Activated naive CD4-positive, alpha-beta T cell treated with anti-CD3 and anti-CD28 coated beads, Interleukin-2, amount 10 ng/mL, durations not matched to agents 7 days and 5 days (primary cell): ENCODE measurements at regions of chr14 and their contacts with region 1.

Region 1: GRCh38 chr14:71138448-71139293 is 231.4 kb downstream of the PCNX1 start:
- DNase-seq: peak; percentile 71
- H3K4me3 Mint-ChIP-seq: no peak overlapping the region
- H3K27ac Mint-ChIP-seq: no peak overlapping the region
- H3K4me1 Mint-ChIP-seq: peaks cover 31% of the 10 kb centered on the region
- H3K27me3 Mint-ChIP-seq: peaks cover 15% of the 10 kb centered on the region

Region 2: GRCh38 chr14:70995676-70996075 is 143.0 kb before region 1 on chr14:
- CTCF ChIA-PET with region 1: no interaction called
- DNase-seq: no peak
- H3K4me3 Mint-ChIP-seq: no peak overlapping the region
- H3K27ac Mint-ChIP-seq: no peak overlapping the region
- H3K4me1 Mint-ChIP-seq: peaks cover 31% of the 10 kb centered on the region
- H3K27me3 Mint-ChIP-seq: no peaks in the 10 kb centered on the region

Region 3: DNA sequence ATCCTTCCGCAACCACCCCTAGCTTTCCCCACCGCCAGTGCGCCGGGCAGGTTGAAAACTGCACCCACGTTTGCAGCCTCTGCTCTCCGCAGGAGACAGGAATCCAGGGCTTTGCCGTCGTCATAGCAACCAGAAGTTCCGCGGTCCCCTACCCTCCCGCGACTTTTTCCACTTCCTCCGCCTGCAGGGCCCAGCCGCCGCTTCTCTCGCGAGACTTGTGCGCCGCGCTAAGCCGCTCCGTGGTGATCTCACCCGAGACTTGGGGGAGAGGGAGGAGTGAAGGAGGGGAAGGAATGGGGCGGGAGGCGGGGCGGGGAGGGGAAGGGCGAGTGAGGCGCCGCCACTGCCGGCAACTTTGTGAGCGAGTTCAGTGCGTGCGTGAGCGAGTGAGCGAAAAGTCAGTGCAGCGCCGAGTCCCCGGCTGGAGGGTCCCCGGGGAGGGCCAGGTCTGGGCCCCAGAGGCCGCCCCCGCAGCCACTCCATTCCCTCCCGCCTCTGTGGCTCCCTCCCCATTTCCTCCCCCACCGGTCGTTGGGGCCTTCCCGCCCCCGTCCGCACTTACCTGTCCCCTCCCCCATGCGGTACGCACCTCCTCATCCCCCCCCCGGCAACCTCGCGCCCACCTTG is 181.5 kb after region 1 on chr14:
- CTCF ChIA-PET with region 1: interaction called, 22 read pairs
- DNase-seq: peak; percentile 99
- H3K4me3 Mint-ChIP-seq: peak within 1 kb of the TSS; percentile 89
- H3K27ac Mint-ChIP-seq: peak within 1 kb of the TSS; percentile 90
- H3K4me1 Mint-ChIP-seq: peaks cover 42% of the 10 kb centered on the region
- H3K27me3 Mint-ChIP-seq: peaks cover 12% of the 10 kb centered on the region

Region 4: GRCh38 chr14:71403656-71404055 is 265.0 kb after region 1 on chr14:
- CTCF ChIA-PET with region 1: interaction called, 18 read pairs
- DNase-seq: peak; percentile 58
- H3K4me3 Mint-ChIP-seq: no peak overlapping the region
- H3K27ac Mint-ChIP-seq: peak overlapping the region; percentile 42
- H3K4me1 Mint-ChIP-seq: peaks cover 44% of the 10 kb centered on the region
- H3K27me3 Mint-ChIP-seq: no peaks in the 10 kb centered on the region

Region 5: DNA sequence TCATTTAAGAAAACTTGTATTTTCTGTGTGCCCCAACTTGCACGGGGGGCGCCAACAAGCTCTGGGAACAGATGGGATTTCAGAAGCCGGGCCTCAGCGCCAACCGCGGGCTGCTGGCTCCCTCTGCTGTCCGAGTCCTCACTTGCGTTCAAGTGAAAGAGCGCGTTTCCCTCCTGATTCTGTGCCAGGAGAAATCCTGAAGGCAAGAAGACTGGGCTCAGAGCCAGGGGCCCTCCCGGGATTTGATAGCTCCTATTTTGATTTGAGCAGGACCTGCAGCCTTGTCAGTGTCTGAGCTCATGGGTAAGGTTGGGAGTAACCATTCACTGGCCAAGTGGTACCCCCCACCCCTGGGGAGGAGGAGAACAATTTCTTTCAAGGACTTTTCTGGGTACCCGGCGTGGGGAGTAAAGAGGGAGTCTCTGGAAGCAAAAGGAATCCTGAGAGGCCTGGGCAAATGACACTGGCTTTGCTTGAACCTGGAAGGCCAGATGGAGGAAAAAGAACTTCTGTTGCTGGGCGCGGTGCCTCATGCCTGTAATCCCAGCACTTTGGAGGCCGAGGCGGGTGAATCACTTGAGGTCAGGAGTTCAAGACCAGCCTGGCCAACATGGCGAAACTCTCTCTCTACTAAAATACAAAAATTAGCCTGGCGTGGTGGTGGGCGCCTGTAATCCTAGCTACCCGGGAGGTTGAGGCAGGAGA is 614.6 kb after region 1 on chr14:
- CTCF ChIA-PET with region 1: interaction called, 56 read pairs
- DNase-seq: peak; percentile 80
- H3K4me3 Mint-ChIP-seq: no peak overlapping the region
- H3K27ac Mint-ChIP-seq: no peak overlapping the region
- H3K4me1 Mint-ChIP-seq: no peaks in the 10 kb centered on the region
- H3K27me3 Mint-ChIP-seq: peaks cover 33% of the 10 kb centered on the region

Region 6: DNA sequence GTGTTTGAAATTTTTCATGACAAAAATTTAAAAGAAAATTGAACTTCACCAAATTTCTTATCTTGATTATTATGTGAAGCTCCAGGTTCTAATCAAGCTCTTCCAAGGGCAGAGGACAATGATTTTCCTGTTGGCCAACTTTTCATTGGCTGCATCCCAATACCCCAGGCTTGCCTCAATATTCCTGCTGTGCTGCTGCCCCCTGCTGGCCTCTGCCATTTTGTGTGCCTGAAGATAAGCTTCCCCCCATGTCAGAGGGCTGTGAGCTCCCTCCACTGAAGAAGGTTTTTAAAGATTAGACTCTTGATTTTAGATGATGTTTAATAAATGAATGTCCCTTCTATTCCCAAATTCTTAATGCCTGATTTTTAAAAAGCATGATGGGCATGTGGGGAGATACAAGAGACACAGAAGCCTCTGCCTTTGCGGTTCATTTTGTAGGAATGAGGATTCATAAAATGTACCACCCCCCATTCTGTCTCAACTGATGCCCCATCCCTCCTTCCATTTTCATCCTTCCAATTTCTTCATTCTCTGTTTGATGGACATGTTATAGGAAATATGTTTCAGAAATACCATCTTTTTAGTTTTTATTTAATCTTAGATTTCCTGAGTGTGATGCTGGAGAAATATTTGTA is 716.8 kb after region 1 on chr14:
- CTCF ChIA-PET with region 1: interaction called, 18 read pairs
- DNase-seq: peak; percentile 69
- H3K4me3 Mint-ChIP-seq: no peak overlapping the region
- H3K27ac Mint-ChIP-seq: no peak overlapping the region
- H3K4me1 Mint-ChIP-seq: peaks cover 9% of the 10 kb centered on the region
- H3K27me3 Mint-ChIP-seq: peaks cover 24% of the 10 kb centered on the region